Ascending aorta (tissue), 2 donors: ENCODE measurements at regions of chr15 and their contacts with region 1.

Region 1: GRCh38 chr15:66841953-66842681 is 140.1 kb downstream of the SMAD6 start:
- DNase-seq: peak; percentile 79 to 96
- H3K4me3 ChIP-seq: peak overlapping the region; percentile 57 to 60
- H3K27ac ChIP-seq: peak overlapping the region; percentile 89 to 95
- H3K4me1 ChIP-seq: peaks cover 21 to 40% of the 10 kb centered on the region in 2 donors
- H3K27me3 ChIP-seq: no peaks in the 10 kb centered on the region
- CTCF ChIP-seq: no peak

Region 2: DNA sequence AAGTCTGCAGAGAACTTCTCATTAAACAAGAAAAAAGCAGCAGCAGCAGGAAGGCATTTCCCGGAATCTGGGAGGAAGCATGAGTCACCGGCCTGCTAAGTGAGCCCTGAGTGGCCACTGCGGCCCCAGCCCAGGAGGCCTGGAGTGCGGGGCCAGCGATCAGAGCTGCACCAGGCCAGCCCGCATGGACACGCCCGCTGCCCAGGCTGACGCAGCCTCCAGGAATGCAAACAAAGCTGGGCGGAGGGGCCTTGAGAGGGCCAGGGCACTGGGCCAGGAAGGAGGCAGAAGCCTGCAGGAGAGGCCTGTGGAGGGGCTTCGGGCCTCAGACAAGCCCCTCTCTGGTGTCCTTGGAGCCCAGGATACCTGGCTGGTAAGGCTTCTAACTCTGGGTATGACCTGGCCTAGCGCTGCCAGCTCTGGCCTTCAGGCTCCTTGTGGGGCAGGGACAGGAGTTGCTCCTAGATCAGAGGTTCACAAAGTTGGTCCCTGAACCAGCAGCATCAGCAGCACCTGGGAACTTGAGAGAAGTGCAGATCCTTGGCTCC is 38.9 kb before region 1 on chr15:
- intact Hi-C with region 1: loop called (anchors 1 kb)
- DNase-seq: peak; percentile 75 to 97
- H3K4me3 ChIP-seq: no peak overlapping the region
- H3K27ac ChIP-seq: peak overlapping the region; percentile 83 to 94
- H3K4me1 ChIP-seq: peaks cover 15 to 29% of the 10 kb centered on the region in 2 donors
- H3K27me3 ChIP-seq: no peaks in the 10 kb centered on the region
- CTCF ChIP-seq: no peak

Region 3: DNA sequence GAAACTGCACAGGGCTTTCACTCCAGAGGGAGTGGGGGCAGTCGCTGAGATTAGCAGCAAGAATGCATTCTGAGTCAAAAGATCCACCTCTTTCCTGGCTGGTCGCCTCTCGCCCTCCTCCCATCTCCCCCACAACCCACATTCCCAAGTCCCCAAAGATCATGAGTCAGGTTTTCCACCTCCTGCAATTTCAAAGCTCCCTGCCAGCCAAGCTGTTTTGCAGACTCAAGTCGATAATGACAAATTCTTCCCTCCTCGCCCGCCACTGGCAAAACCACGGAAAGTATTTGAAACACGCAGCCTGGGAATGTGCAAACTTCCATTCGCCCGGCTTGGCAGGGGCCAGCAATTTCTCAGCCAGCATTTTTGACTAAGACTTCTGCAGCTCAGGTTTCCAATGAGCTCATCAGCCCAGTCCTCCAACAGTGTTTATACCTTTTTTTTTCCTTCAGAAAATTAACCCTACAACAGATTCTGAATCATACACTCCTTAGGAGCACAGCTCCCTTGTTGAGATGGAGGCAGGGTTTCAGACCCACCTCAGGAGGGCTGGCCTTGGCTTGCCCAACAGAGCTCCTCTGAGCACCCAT is 41.3 kb after region 1 on chr15:
- intact Hi-C with region 1: loop called (anchors 2 kb)
- DNase-seq: peak; percentile 80 to 99
- H3K4me3 ChIP-seq: no peak overlapping the region
- H3K27ac ChIP-seq: peak overlapping the region; percentile 63 to 73
- H3K4me1 ChIP-seq: peaks cover 6 to 27% of the 10 kb centered on the region in 2 donors
- H3K27me3 ChIP-seq: no peaks in the 10 kb centered on the region
- CTCF ChIP-seq: no peak

Region 4: GRCh38 chr15:66997212-66997611 is 155.1 kb after region 1 on chr15:
- intact Hi-C with region 1: no loop called
- DNase-seq: no peak
- H3K4me3 ChIP-seq: no peak overlapping the region
- H3K27ac ChIP-seq: no peak overlapping the region
- H3K4me1 ChIP-seq: no peaks in the 10 kb centered on the region
- H3K27me3 ChIP-seq: no peaks in the 10 kb centered on the region
- CTCF ChIP-seq: no peak